Mammary epithelial cell (primary cell): ENCODE measurements at regions of chrX and their contacts with region 1.

Region 1: DNA sequence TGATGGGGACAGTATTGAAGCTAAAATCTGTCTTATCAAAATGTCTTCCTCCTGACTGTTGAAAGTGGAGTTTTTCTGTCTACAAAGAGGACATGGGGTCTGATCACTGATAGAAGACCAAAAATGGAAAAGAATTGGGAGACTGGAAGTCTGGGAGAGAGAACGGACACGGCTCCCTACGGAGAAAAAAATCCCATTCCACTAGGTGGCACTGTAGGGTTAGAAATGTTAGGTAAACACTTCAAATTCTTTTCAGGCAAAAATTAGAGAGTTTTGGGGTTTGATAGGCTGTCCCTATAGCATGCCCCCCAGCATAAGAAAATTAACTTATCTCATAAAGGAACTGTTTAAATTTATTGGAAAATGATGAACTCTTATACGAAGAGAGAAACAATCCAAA is 200.5 kb downstream of the FAM133A start:
- DNase-seq: peak; percentile 8
- H3K4me3 ChIP-seq: no peak overlapping the region
- H3K27ac ChIP-seq: no peak overlapping the region
- H3K4me1 ChIP-seq: no peaks in the 10 kb centered on the region
- H3K27me3 ChIP-seq: no peaks in the 10 kb centered on the region
- CTCF ChIP-seq: peak; percentile 39 to 69

Region 2: GRCh38 chrX:93703701-93704100 is 170.9 kb before region 1 on chrX:
- CTCF ChIA-PET with region 1: no interaction called
- dilution Hi-C with region 1: no loop called
- in situ Hi-C with region 1: no loop called
- intact Hi-C with region 1: no loop called
- DNase-seq: no peak
- H3K4me3 ChIP-seq: no peak overlapping the region
- H3K27ac ChIP-seq: no peak overlapping the region
- H3K4me1 ChIP-seq: no peaks in the 10 kb centered on the region
- H3K27me3 ChIP-seq: no peaks in the 10 kb centered on the region
- CTCF ChIP-seq: no peak

Region 3: DNA sequence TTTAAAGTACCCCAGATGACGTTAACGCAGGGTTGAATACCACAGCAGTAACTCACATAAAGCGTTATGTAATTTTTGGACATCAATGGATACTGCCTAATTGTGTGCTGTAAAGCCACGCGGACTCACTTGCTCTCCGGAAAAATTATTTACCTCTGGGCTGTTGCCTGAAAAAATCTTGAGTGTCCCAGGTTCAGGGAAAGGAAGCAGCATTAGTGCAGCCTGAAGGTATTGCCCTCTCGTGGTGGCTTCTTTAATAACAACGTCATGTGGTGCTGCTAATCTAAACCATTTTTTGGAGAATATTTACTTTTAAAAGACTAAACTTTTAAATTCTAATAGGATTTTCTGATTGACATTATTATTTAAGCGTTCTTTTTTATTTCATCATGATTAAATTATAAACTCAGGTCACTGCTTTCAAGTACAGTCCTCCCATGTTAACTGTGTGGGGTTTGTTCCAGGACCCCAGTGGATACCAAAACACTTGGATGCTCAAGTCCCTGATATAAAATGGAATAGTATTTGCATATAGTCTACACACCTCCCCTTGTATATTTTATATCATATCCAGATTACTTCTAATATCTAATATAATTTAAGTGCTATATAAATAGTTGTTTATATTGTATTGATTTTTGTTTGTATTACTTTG is 184.3 kb after region 1 on chrX:
- CTCF ChIA-PET with region 1: no interaction called
- dilution Hi-C with region 1: no loop called
- in situ Hi-C with region 1: no loop called
- intact Hi-C with region 1: loop called (anchors 1 kb)
- DNase-seq: peak; percentile 20
- H3K4me3 ChIP-seq: no peak overlapping the region
- H3K27ac ChIP-seq: no peak overlapping the region
- H3K4me1 ChIP-seq: no peaks in the 10 kb centered on the region
- H3K27me3 ChIP-seq: no peaks in the 10 kb centered on the region
- CTCF ChIP-seq: peak; percentile 67 to 77

Region 4: GRCh38 chrX:94107981-94108380 is 233.4 kb after region 1 on chrX:
- CTCF ChIA-PET with region 1: no interaction called
- dilution Hi-C with region 1: no loop called
- in situ Hi-C with region 1: no loop called
- intact Hi-C with region 1: loop called (anchors 1 kb)
- DNase-seq: no peak
- H3K4me3 ChIP-seq: no peak overlapping the region
- H3K27ac ChIP-seq: no peak overlapping the region
- H3K4me1 ChIP-seq: no peaks in the 10 kb centered on the region
- H3K27me3 ChIP-seq: no peaks in the 10 kb centered on the region
- CTCF ChIP-seq: peak; percentile 23 to 50

Region 5: GRCh38 chrX:94216738-94217137 is 342.2 kb after region 1 on chrX:
- CTCF ChIA-PET with region 1: no interaction called
- dilution Hi-C with region 1: no loop called
- in situ Hi-C with region 1: no loop called
- intact Hi-C with region 1: loop called (anchors 10 kb)
- DNase-seq: no peak
- H3K4me3 ChIP-seq: no peak overlapping the region
- H3K27ac ChIP-seq: no peak overlapping the region
- H3K4me1 ChIP-seq: no peaks in the 10 kb centered on the region
- H3K27me3 ChIP-seq: no peaks in the 10 kb centered on the region
- CTCF ChIP-seq: no peak

Region 6: DNA sequence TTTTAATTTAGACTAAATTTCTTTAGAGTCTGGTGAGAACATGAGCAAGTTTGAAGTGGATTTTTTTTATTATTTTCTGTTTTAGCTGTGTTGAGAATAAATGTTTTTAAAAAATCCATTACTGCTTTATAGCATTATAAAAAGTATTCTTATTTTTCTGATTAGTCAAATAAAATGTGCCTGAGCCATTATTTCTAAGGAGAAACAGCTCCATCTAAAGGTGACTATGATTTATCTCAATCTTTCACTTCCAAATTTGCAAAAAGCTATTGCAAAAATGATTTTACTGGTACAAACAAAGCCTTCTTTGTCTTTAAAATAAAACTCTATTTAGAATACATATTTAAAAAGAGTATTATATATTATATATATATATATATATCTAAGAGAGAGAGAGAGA is 758.7 kb after region 1 on chrX:
- CTCF ChIA-PET with region 1: no interaction called
- dilution Hi-C with region 1: no loop called
- in situ Hi-C with region 1: loop called in 1 of 2 experiments (anchors 25 kb)
- intact Hi-C with region 1: no loop called
- DNase-seq: no peak
- H3K4me3 ChIP-seq: no peak overlapping the region
- H3K27ac ChIP-seq: no peak overlapping the region
- H3K4me1 ChIP-seq: no peaks in the 10 kb centered on the region
- H3K27me3 ChIP-seq: no peaks in the 10 kb centered on the region
- CTCF ChIP-seq: peak; percentile 3 to 38

Region 7: GRCh38 chrX:94662689-94663088 is 788.1 kb after region 1 on chrX:
- CTCF ChIA-PET with region 1: no interaction called
- dilution Hi-C with region 1: no loop called
- in situ Hi-C with region 1: no loop called
- intact Hi-C with region 1: loop called (anchors 10 kb)
- DNase-seq: no peak
- H3K4me3 ChIP-seq: no peak overlapping the region
- H3K27ac ChIP-seq: no peak overlapping the region
- H3K4me1 ChIP-seq: no peaks in the 10 kb centered on the region
- H3K27me3 ChIP-seq: peaks cover 2% of the 10 kb centered on the region
- CTCF ChIP-seq: peak; percentile 31 to 43